ENCODE measurements at regions of chr7 and their contacts with region 1.

Region 1: DNA sequence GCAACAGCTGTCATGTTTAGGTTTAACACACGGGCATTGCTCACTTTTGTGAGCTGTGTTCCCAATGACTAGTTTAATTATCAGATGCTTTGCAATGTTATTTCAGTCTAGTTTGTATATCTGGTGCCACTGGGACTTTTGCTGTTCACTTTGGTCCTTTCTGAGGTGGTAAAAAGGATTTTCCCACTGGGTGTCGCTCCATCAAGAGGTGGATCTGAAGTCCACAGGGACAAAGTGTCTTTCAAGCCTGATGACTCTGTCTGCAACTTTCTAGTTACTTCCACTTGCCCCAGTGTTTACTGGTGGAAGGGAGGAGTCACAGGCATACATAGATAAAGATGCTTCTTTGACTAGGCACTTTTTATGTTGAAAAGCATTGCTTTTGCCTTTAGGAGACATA is 242.2 kb downstream of the HGF start:
- DNase-seq: peak; percentile 7
- ATAC-seq: peak; percentile 71
- H3K4me3 ChIP-seq: no peak overlapping the region
- H3K27ac ChIP-seq: no peak overlapping the region
- H3K4me1 ChIP-seq: no peaks in the 10 kb centered on the region
- H3K27me3 ChIP-seq: no peaks in the 10 kb centered on the region
- CTCF ChIP-seq: peak; percentile 35; the same call in 1 of the 2 replicates
- EP300 ChIP-seq: no peak
- POLR2A ChIP-seq: no peak
- RAD21 ChIP-seq: no peak

Region 2: GRCh38 chr7:81515009-81515408 is 12.6 kb before region 1 on chr7:
- CTCF ChIA-PET with region 1: no interaction called
- POLR2A ChIA-PET with region 1: no interaction called
- in situ Hi-C with region 1: no loop called
- intact Hi-C with region 1: no loop called
- DNase-seq: no peak
- ATAC-seq: no peak
- H3K4me3 ChIP-seq: no peak overlapping the region
- H3K27ac ChIP-seq: no peak overlapping the region
- H3K4me1 ChIP-seq: no peaks in the 10 kb centered on the region
- H3K27me3 ChIP-seq: no peaks in the 10 kb centered on the region
- CTCF ChIP-seq: no peak
- EP300 ChIP-seq: no peak
- POLR2A ChIP-seq: no peak
- RAD21 ChIP-seq: no peak

Region 3: DNA sequence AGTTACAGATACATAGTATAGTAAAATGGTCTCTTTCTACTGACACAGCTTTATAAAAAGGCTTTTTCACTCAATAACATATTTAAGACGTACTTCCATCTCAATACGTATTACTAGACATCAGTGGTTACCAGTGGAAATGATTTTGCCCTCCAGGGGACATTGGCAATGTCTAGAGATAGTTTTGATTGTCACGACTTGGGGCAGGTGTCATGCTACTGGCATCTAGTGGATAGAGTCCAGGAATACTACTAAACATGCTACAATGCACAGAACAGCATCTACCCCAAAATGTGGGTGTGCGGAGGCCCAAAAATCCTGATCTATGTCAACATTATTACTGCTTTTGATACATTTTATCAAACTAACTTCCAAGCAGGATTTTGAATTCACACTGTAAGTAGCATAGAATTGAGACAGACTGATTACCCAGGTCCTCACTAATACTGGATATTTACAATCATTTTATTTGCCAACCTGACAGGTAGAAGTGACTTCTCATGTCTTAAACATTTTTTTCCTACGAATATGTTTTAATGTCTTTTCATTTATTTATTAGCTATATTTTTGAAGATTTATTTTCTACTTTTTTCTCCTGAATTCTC is 188.4 kb after region 1 on chr7:
- CTCF ChIA-PET with region 1: no interaction called
- POLR2A ChIA-PET with region 1: no interaction called
- in situ Hi-C with region 1: no loop called
- intact Hi-C with region 1: loop called (anchors 1 kb)
- DNase-seq: peak; percentile 1
- ATAC-seq: 0 out of 3 replicates have a peak, but pooled peaks have one; percentile 29
- H3K4me3 ChIP-seq: no peak overlapping the region
- H3K27ac ChIP-seq: no peak overlapping the region
- H3K4me1 ChIP-seq: no peaks in the 10 kb centered on the region
- H3K27me3 ChIP-seq: no peaks in the 10 kb centered on the region
- CTCF ChIP-seq: no peak
- EP300 ChIP-seq: no peak
- POLR2A ChIP-seq: no peak
- RAD21 ChIP-seq: no peak

Region 4: GRCh38 chr7:82057476-82057875 is 529.8 kb after region 1 on chr7:
- CTCF ChIA-PET with region 1: no interaction called
- POLR2A ChIA-PET with region 1: no interaction called
- in situ Hi-C with region 1: no loop called
- intact Hi-C with region 1: no loop called
- DNase-seq: no peak
- ATAC-seq: no peak
- H3K4me3 ChIP-seq: no peak overlapping the region
- H3K27ac ChIP-seq: no peak overlapping the region
- H3K4me1 ChIP-seq: no peaks in the 10 kb centered on the region
- H3K27me3 ChIP-seq: no peaks in the 10 kb centered on the region
- CTCF ChIP-seq: no peak
- EP300 ChIP-seq: no peak
- POLR2A ChIP-seq: no peak
- RAD21 ChIP-seq: no peak

Measured in HepG2 (cell line).